ENCODE measurements at regions of chr10 and their contacts with region 1.

Region 1: GRCh38 chr10:100373298-100374136 is 26.5 kb downstream of the SCD start:
- DNase-seq: peak; percentile 99 to 100
- H3K4me3 ChIP-seq: peak overlapping the region; percentile 56 to 63
- H3K27ac ChIP-seq: peak overlapping the region; percentile 90 to 92
- H3K4me1 ChIP-seq: peaks cover 7 to 25% of the 10 kb centered on the region in 2 donors
- H3K27me3 ChIP-seq: no peaks in the 10 kb centered on the region
- CTCF ChIP-seq: no peak

Region 2: GRCh38 chr10:100286051-100287033 is 87.2 kb before region 1 on chr10 and contains the start of gene BLOC1S2:
- intact Hi-C with region 1: loop called (anchors 1 kb)
- DNase-seq: peak; percentile 58 to 92
- H3K4me3 ChIP-seq: peak within 1 kb of the TSS; percentile 95 to 97
- H3K27ac ChIP-seq: peak within 1 kb of the TSS; percentile 97 to 99
- H3K4me1 ChIP-seq: peaks cover 0 to 21% of the 10 kb centered on the region in 2 donors
- H3K27me3 ChIP-seq: no peaks in the 10 kb centered on the region
- CTCF ChIP-seq: peak in 1 of 3 experiments; percentile 12
- total RNA-seq, gene BLOC1S2: 21.4 TPM

Region 3: GRCh38 chr10:100338434-100339036 is 35.0 kb before region 1 on chr10:
- intact Hi-C with region 1: loop called (anchors 5 kb)
- DNase-seq: peak; percentile 36 to 85
- H3K4me3 ChIP-seq: no peak overlapping the region
- H3K27ac ChIP-seq: no peak overlapping the region
- H3K4me1 ChIP-seq: no peaks in the 10 kb centered on the region
- H3K27me3 ChIP-seq: no peaks in the 10 kb centered on the region
- CTCF ChIP-seq: peak; percentile 87 to 91 (median 90)

Region 4: GRCh38 chr10:100346765-100347567 is 26.6 kb before region 1 on chr10 and contains the start of gene SCD:
- intact Hi-C with region 1: loop called (anchors 1 kb)
- DNase-seq: peak; percentile 75 to 89
- H3K4me3 ChIP-seq: peak within 1 kb of the TSS; percentile 74 to 84
- H3K27ac ChIP-seq: peak within 1 kb of the TSS; percentile 54 to 74
- H3K4me1 ChIP-seq: peaks cover 0 to 4% of the 10 kb centered on the region in 2 donors
- H3K27me3 ChIP-seq: no peaks in the 10 kb centered on the region
- CTCF ChIP-seq: no peak
- total RNA-seq, gene SCD: 2.9 TPM

Region 5: DNA sequence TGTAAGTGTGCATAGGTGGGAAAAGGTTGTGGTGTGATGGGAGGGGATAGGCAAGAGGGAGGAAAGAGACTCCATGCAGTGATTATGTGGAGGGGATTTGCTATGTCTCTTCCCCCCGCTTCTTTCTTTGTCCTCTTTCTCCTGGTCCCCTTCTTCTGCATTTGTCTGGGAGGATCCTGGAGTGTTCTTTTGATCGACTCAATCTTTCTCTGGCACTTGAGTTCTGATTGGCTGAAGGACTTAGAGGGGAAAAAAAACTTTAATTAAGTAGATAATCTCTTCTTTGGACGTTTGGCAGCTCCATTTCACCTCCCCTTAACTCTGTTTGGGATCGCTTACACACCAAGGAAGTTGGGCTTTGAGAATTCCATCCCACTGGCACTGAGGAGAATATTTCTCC is 89.2 kb after region 1 on chr10 and contains the start of gene WNT8B:
- intact Hi-C with region 1: no loop called
- DNase-seq: no peak
- H3K4me3 ChIP-seq: no peak within 1 kb of the TSS
- H3K27ac ChIP-seq: no peak within 1 kb of the TSS
- H3K4me1 ChIP-seq: no peaks in the 10 kb centered on the region
- H3K27me3 ChIP-seq: no peaks in the 10 kb centered on the region
- CTCF ChIP-seq: no peak
- total RNA-seq, gene WNT8B: not detected

Region 6: GRCh38 chr10:100529475-100530298 is 156.2 kb after region 1 on chr10 and contains the start of gene NDUFB8:
- intact Hi-C with region 1: loop called (anchors 2 kb)
- DNase-seq: peak; percentile 62 to 94
- H3K4me3 ChIP-seq: peak within 1 kb of the TSS; percentile 87 to 91
- H3K27ac ChIP-seq: peak within 1 kb of the TSS; percentile 71 to 84
- H3K4me1 ChIP-seq: peaks cover 2 to 7% of the 10 kb centered on the region in 2 donors
- H3K27me3 ChIP-seq: no peaks in the 10 kb centered on the region
- CTCF ChIP-seq: no peak
- total RNA-seq, gene NDUFB8: 71.1 TPM

Region 7: DNA sequence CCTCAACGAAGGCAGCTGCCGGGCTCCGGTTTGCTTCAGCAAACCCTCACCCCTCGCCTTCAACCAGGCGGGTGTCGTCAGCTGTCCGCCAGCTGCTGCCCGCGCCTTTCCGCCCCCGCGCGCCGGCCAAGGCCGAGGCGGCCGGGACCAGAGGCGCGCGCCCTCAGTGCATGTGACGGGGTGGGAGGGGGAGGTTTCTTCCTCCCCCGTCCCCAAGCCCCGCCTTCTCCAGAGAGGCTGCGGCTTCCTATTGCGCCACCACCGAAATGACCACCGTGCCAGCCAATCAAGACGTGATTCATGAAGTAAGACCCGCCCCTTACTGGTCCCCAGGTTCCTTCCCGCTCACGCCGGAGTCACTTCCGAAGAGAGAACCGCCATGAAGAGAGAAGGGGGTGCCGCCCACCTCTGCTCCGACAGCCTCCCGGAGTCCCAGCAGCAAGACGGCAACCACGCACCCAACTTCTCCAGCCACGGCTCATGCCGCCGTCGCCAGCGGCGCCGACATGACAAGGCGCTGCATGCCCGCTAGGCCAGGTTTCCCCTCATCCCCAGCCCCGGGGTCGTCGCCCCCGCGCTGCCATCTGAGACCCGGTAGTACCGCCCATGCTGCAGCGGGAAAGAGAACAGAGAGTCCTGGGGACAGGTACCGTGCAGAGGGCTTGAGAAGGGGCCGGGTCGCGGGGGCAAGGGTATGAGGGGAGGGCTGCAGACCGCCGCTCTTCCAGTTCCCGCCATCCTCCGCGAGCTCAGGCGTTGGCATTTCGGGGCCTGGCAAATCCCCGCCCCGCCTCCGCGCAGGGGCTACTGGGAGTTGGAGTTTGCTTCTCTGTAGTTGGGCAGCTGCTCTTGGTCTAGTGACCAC is 539.3 kb after region 1 on chr10 and contains the start of gene SLF2:
- intact Hi-C with region 1: loop called (anchors 5 kb)
- DNase-seq: peak; percentile 92 to 99
- H3K4me3 ChIP-seq: peak within 1 kb of the TSS; percentile 84 to 89
- H3K27ac ChIP-seq: peak within 1 kb of the TSS; percentile 89 to 90
- H3K4me1 ChIP-seq: peaks cover 5 to 20% of the 10 kb centered on the region in 2 donors
- H3K27me3 ChIP-seq: no peaks in the 10 kb centered on the region
- CTCF ChIP-seq: no peak
- total RNA-seq, gene SLF2: 3.1 TPM

Region 8: DNA sequence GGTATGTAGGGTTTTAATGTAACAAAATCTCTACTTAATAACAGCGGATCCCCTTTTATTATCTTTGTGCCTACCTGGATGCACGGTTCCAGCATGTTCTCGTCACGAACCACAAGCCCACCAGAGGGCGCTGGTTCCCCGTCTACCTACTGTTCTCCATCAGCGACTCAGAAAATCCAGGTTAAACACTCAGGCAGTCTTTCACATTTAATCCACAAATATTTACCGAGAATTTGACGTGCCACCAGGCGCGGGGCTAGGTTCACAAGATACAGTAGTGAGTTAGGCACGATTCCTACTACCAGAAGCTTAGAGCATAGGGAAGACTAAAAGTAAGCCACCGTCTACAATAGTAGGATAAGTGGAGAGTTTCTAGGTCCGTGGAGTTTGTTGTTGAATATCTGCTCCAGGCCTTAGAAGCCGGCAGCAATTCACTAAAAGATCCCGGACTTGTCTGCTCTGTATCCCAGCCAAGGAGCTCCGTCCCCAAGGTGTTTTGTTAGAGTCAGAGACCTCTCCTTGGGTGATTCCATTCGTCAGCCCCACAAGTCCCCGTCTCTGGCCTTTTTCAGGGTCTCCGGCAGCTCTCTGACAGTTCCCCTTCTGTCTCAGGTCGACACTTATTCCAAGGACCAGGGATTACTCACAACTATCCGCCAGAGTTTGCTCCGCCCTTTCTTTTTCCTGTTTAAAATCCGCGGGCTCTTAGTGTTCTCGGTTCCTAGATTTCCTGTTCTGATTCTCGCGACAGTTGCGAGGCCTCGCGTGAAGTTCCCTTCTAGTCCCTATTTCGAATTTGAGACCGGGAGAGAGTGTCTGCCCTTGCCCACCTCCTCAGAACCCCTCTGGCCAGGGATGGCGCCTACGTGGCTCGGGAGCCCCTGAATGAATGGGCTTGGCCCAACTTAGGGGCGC is 686.8 kb after region 1 on chr10:
- intact Hi-C with region 1: loop called (anchors 5 kb)
- DNase-seq: peak; percentile 82 to 96
- H3K4me3 ChIP-seq: peak overlapping the region; percentile 60 to 79
- H3K27ac ChIP-seq: peak overlapping the region; percentile 96 to 98
- H3K4me1 ChIP-seq: peaks cover 2 to 33% of the 10 kb centered on the region in 2 donors
- H3K27me3 ChIP-seq: no peaks in the 10 kb centered on the region
- CTCF ChIP-seq: peak; percentile 75 to 89 (median 78)